AG04449 (cell line): ENCODE measurements at regions of chr5 and their contacts with region 1.

Region 1: GRCh38 chr5:73540192-73540591 is 25.2 kb downstream of the ANKRA2 start:
- DNase-seq: no peak
- H3K4me3 ChIP-seq: no peak overlapping the region
- CTCF ChIP-seq: no peak

Region 2: DNA sequence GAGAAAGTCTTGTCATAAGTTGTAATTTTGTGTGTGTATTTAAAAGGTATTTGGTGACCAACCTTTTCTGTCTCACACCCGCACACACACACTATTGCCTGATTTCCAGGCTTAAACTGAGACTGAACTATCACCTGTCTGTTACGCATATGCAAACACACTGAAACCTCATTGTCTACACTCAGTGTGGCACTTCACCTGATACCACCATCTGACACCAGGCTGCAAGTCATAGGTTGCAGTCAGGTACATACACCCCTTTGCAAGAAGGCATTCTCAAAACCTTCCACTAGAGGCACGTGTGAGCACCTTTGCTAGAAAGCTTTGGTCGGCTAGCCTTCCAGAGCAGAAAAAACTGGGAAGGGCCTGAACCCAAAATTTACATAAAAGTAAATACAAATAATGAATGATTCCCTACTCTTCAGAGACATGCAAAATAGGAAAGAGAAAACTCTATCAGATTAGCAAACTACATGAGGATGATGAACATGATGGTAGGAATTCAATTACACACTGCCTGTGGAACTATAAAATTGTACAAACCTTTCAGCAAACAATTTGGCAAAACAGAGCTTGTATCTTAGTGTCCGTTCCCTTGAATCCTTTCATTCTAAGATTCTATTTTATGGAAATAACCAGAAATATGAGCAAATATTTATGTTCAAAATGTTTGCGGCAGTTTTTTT is 85.7 kb before region 1 on chr5:
- CTCF ChIA-PET with region 1: interaction called, 17 read pairs
- POLR2A ChIA-PET with region 1: no interaction called
- DNase-seq: no peak
- H3K4me3 ChIP-seq: no peak overlapping the region
- CTCF ChIP-seq: peak; percentile 77

Region 3: DNA sequence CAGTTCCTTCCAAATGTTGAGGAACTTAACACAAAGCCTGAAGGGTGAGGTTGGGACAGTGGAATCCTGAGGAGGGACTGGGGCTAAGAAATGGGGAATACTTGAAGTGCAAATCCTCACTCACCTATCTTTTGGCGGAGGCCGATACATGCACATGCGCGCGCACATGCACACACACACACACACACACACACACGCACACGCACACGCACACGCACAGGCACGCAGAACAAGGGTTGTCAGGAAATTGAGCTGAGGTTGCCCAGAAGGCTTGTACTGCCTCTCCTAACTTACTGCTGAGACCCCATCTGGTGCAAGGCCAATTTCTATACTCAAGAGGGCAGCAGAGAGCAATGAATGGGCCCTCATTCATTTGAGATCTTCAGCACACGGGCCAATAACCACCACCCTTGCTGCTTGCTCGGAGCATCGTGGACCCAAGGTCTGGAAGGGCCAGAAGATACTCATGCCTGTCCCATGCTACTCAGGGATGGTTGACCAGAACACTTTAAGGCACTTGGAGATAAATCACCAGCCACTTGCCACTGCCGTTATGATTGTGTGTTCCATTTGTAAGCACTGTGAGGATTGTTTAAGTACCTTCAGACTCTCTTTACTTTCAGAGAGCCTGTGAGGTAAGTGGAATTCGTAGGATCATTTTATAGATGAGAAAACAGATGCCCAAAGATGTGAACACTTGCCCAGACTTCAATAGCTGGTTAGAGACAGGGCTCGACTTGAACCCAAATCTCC is 20.5 kb before region 1 on chr5:
- CTCF ChIA-PET with region 1: interaction called, 205 read pairs
- POLR2A ChIA-PET with region 1: no interaction called
- DNase-seq: no peak
- H3K4me3 ChIP-seq: no peak overlapping the region; the same call in 1 of the 2 replicates
- CTCF ChIP-seq: peak; percentile 87

Region 4: GRCh38 chr5:73565139-73565968 is 25.2 kb after region 1 on chr5 and contains the starts of genes ANKRA2 and UTP15:
- CTCF ChIA-PET with region 1: interaction called, 18 read pairs
- POLR2A ChIA-PET with region 1: no interaction called
- DNase-seq: peak; percentile 84
- H3K4me3 ChIP-seq: peak within 1 kb of the TSS; percentile 97
- CTCF ChIP-seq: no peak

Region 5: GRCh38 chr5:73654171-73654811 is 114.1 kb after region 1 on chr5:
- CTCF ChIA-PET with region 1: no interaction called
- POLR2A ChIA-PET with region 1: no interaction called
- DNase-seq: no peak
- H3K4me3 ChIP-seq: no peak overlapping the region
- CTCF ChIP-seq: no peak